Activated CD4-positive, alpha-beta T cell treated with anti-CD3 and anti-CD28 coated beads for 36 hours (primary cell): ENCODE measurements at regions of chr7 and their contacts with region 1.

Region 1: DNA sequence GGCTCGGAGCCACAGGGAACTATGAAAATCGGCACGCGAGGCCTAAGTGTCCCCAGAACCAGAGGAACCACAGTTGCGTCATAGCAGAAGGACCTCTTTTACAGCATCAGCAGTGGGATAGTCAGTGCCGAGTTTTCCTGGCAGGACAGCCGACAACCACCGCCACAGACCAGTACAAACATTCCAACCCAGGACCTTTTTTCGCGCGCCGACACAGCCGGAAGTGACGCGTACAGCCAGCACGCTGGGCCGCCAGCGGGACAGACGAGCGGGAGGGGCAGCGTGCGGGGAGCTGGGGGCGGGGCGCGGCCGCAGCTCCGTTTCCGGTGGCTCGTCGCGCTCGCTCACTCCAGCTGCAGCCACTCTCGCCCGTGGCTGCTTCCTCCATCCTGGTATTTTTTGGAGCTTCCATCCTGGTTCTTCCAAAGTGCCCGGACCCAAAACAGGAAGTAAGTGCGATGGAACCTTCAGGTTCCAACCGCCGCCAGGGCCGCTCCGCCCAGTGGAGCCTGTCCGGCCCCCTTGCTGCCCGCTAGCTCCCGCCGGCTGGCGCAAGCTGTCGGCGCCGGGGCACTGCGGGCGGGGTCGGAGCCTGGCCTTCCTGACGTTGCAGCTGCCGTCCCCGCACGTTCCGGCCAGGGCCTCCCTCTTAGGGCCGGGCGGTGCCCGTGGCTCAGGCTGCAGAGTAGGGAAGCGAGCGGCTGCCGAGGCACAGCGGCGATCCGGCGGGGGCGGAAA is at the start of gene DMTF1:
- DNase-seq: peak; percentile 93
- ATAC-seq: peak; percentile 82
- H3K4me3 Mint-ChIP-seq: peak within 1 kb of the TSS; percentile 85
- H3K27ac Mint-ChIP-seq: peak within 1 kb of the TSS; percentile 99
- H3K4me1 Mint-ChIP-seq: peaks cover 37% of the 10 kb centered on the region
- H3K27me3 Mint-ChIP-seq: no peaks in the 10 kb centered on the region
- total RNA-seq, gene DMTF1: 60.4 to 64.9 TPM

Region 2: DNA sequence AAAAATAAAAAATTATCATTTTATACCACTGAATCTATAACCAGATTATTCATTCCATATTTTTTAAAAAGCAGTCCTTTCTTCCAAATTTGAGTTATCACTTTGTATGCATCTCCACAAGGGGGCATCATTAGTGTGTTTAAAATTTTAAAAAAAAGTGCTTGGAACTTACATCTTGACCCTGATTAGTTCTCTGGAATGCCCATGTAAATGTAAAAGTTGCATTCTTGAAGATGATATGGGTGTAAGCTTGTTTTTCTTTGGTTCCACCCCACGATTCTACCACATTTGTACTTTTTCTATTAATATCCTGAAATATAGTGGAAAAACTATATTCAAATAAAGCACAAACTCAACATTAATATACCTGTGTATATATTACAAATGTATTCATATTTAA is 237.7 kb before region 1 on chr7:
- CTCF ChIA-PET with region 1: interaction called, 10 read pairs
- POLR2A ChIA-PET with region 1: no interaction called
- intact Hi-C with region 1: no loop called
- DNase-seq: no peak
- ATAC-seq: no peak
- H3K4me3 Mint-ChIP-seq: no peak overlapping the region
- H3K27ac Mint-ChIP-seq: no peak overlapping the region
- H3K4me1 Mint-ChIP-seq: peaks cover 7% of the 10 kb centered on the region
- H3K27me3 Mint-ChIP-seq: peaks cover 2% of the 10 kb centered on the region

Region 3: DNA sequence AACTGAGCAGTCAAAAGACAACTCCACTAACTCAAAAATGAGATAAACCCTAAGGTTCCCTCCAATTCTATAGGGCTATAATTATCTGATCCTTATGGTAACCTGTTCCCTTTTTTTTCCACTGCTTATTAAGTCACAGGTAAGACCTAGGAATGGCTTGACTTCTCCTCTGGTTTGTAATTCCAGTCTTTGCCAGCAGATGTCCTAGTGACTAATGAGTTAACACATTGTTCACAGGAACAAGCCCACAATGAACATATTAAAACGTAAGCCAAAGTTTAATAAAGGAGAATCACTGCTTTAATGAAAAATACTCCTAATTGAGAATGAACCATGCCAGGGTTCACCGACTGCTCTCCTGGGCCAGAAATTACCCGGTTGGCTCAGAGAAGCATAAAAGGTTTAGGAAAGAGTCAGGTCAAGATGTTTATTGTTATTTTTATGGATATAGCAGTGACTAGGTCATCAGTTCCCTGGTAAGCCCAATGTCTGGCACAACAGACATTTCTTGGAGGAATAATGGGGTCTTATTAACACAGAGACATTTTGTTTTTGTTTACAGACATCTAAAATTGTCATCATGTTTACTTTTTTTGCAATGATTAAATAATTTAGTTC is 213.0 kb before region 1 on chr7:
- CTCF ChIA-PET with region 1: interaction called, 8 read pairs
- POLR2A ChIA-PET with region 1: no interaction called
- intact Hi-C with region 1: loop called (anchors 1 kb)
- DNase-seq: peak; percentile 46
- ATAC-seq: peak; percentile 65
- H3K4me3 Mint-ChIP-seq: no peak overlapping the region
- H3K27ac Mint-ChIP-seq: no peak overlapping the region
- H3K4me1 Mint-ChIP-seq: no peaks in the 10 kb centered on the region
- H3K27me3 Mint-ChIP-seq: no peaks in the 10 kb centered on the region

Region 4: GRCh38 chr7:87059525-87060287 is 92.6 kb before region 1 on chr7 and contains the start of gene ELAPOR2:
- CTCF ChIA-PET with region 1: interaction called, 8 read pairs
- POLR2A ChIA-PET with region 1: no interaction called
- intact Hi-C with region 1: loop called (anchors 1 to 5 kb)
- DNase-seq: peak; percentile 88
- ATAC-seq: peak; percentile 95
- H3K4me3 Mint-ChIP-seq: peak within 1 kb of the TSS; percentile 73
- H3K27ac Mint-ChIP-seq: peak within 1 kb of the TSS; percentile 63
- H3K4me1 Mint-ChIP-seq: peaks cover 13% of the 10 kb centered on the region
- H3K27me3 Mint-ChIP-seq: peaks cover 17% of the 10 kb centered on the region
- total RNA-seq, gene ELAPOR2: 3.9 to 4.4 TPM

Region 5: DNA sequence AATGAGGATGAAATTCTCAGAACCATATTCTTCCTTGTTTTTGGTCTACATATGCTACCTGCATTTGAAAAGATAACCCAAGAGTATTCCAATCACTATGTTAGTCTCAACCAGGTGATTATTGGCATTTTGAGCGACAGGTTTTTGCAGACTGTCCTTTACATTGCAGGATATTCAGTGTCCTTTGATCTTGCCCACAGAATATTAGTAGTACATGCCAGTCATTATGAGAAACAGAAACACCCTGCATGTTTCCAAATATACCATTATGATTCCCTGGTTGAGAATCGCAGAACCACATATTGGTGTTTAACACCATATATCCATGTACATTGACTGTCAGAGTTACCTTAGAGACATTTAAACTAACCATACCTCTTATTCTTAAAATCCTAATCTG is 36.7 kb after region 1 on chr7:
- CTCF ChIA-PET with region 1: interaction called, 4 read pairs
- POLR2A ChIA-PET with region 1: interaction called, 10 read pairs
- intact Hi-C with region 1: no loop called
- DNase-seq: no peak
- ATAC-seq: no peak
- H3K4me3 Mint-ChIP-seq: no peak overlapping the region
- H3K27ac Mint-ChIP-seq: no peak overlapping the region
- H3K4me1 Mint-ChIP-seq: peaks cover 26% of the 10 kb centered on the region
- H3K27me3 Mint-ChIP-seq: no peaks in the 10 kb centered on the region

Region 6: GRCh38 chr7:87231256-87231655 is 79.0 kb after region 1 on chr7:
- CTCF ChIA-PET with region 1: interaction called, 9 read pairs
- POLR2A ChIA-PET with region 1: no interaction called
- intact Hi-C with region 1: loop called in 1 of 2 experiments (anchors 5 kb)
- DNase-seq: no peak
- ATAC-seq: no peak
- H3K4me3 Mint-ChIP-seq: no peak overlapping the region
- H3K27ac Mint-ChIP-seq: no peak overlapping the region
- H3K4me1 Mint-ChIP-seq: peaks cover 9% of the 10 kb centered on the region
- H3K27me3 Mint-ChIP-seq: peaks cover 4% of the 10 kb centered on the region

Region 7: GRCh38 chr7:87628780-87629569 is 476.7 kb after region 1 on chr7:
- CTCF ChIA-PET with region 1: no interaction called
- POLR2A ChIA-PET with region 1: no interaction called
- intact Hi-C with region 1: loop called in 1 of 2 experiments (anchors 2 kb)
- DNase-seq: peak; percentile 68
- ATAC-seq: peak; percentile 40
- H3K4me3 Mint-ChIP-seq: peak overlapping the region; percentile 74
- H3K27ac Mint-ChIP-seq: no peak overlapping the region
- H3K4me1 Mint-ChIP-seq: peaks cover 10% of the 10 kb centered on the region
- H3K27me3 Mint-ChIP-seq: peaks cover 10% of the 10 kb centered on the region